ENCODE measurements at regions of chr4 and their contacts with region 1.

Region 1: DNA sequence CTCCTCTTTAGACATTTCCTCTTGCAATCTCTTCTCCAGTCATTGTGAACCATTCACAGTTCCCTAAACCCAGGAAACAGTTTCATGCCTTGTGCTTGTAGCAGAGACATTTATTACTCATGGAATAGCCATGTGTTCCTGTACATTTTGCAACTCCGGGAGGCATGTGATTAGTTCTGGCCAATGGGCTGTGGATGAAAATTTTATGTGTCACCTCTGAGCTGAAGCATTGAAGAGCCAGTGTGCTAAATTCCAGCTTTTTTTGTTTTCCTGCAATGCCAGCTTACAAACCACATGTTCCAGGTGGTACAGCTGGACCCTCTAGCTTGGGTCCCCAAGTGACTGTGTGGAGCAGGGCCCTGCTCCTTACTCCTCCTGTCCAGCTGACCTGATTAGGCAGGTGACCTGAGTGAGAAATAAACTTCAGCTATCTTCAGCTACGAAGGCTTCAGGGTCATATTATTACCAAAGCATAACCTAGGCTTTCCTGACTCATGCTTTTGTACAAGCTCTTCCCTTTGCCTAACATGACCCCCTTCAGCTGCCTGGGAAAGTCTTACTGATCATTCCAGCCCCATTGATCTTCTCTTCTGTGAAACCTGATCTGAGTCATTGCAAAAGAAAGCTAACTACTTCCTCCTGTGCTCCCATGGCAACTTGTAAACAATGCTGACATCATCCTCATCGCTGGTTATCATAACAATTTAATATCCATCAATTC is 200.4 kb downstream of the PTTG2 start:
- DNase-seq: peak; percentile 95
- H3K4me3 ChIP-seq: no peak overlapping the region
- H3K27ac ChIP-seq: peak overlapping the region; percentile 100
- H3K27me3 ChIP-seq: no peaks in the 10 kb centered on the region
- CTCF ChIP-seq: no peak

Region 2: GRCh38 chr4:38149997-38150671 is 10.5 kb before region 1 on chr4:
- CTCF ChIA-PET with region 1: interaction called, 3 read pairs
- POLR2A ChIA-PET with region 1: interaction called, 10 read pairs
- DNase-seq: no peak
- H3K4me3 ChIP-seq: no peak overlapping the region
- H3K27ac ChIP-seq: peak overlapping the region; percentile 65
- H3K27me3 ChIP-seq: no peaks in the 10 kb centered on the region
- CTCF ChIP-seq: no peak

Region 3: DNA sequence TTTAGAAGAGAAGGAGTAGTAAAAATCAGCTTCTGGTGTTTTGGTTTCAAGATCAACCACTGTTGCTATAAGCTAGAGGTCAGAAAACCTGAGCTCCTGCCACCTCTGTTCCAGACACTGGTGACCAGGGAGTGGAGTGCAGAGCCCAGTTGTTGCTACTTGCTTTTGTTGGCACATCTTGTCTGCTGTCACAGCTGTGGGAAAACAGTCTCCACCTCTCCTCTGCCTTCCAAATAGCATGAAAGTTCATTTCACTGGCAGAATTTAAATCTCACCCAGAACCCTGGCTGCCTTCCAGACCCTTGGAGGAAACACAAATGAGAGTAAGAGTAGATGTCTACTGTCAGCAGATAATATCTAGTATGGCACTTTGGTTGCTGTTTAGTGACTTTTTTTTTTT is 205.8 kb after region 1 on chr4:
- CTCF ChIA-PET with region 1: no interaction called
- POLR2A ChIA-PET with region 1: no interaction called
- DNase-seq: no peak
- H3K4me3 ChIP-seq: no peak overlapping the region
- H3K27ac ChIP-seq: no peak overlapping the region
- H3K27me3 ChIP-seq: peaks cover 10% of the 10 kb centered on the region
- CTCF ChIP-seq: no peak

Measured in AG04450 (cell line).